Activated CD8-positive, alpha-beta memory T cell treated with anti-CD3 and anti-CD28 coated beads, Interleukin-2, amount 10 ng/mL, durations not matched to agents 7 days and 5 days (primary cell): ENCODE measurements at regions of chr2 and their contacts with region 1.

Region 1: GRCh38 chr2:127479219-127479825 is 47.0 kb downstream of the IWS1 start:
- DNase-seq: no peak
- ATAC-seq: no peak
- H3K4me3 Mint-ChIP-seq: no peak overlapping the region
- H3K27ac Mint-ChIP-seq: no peak overlapping the region
- H3K4me1 Mint-ChIP-seq: no peaks in the 10 kb centered on the region
- H3K27me3 Mint-ChIP-seq: no peaks in the 10 kb centered on the region

Region 2: GRCh38 chr2:127197475-127198385 is 281.6 kb before region 1 on chr2:
- CTCF ChIA-PET with region 1: interaction called, 20 read pairs
- DNase-seq: peak; percentile 73
- ATAC-seq: peak; percentile 91
- H3K4me3 Mint-ChIP-seq: peak overlapping the region; percentile 60
- H3K27ac Mint-ChIP-seq: no peak overlapping the region
- H3K4me1 Mint-ChIP-seq: no peaks in the 10 kb centered on the region
- H3K27me3 Mint-ChIP-seq: peaks cover 4% of the 10 kb centered on the region

Region 3: DNA sequence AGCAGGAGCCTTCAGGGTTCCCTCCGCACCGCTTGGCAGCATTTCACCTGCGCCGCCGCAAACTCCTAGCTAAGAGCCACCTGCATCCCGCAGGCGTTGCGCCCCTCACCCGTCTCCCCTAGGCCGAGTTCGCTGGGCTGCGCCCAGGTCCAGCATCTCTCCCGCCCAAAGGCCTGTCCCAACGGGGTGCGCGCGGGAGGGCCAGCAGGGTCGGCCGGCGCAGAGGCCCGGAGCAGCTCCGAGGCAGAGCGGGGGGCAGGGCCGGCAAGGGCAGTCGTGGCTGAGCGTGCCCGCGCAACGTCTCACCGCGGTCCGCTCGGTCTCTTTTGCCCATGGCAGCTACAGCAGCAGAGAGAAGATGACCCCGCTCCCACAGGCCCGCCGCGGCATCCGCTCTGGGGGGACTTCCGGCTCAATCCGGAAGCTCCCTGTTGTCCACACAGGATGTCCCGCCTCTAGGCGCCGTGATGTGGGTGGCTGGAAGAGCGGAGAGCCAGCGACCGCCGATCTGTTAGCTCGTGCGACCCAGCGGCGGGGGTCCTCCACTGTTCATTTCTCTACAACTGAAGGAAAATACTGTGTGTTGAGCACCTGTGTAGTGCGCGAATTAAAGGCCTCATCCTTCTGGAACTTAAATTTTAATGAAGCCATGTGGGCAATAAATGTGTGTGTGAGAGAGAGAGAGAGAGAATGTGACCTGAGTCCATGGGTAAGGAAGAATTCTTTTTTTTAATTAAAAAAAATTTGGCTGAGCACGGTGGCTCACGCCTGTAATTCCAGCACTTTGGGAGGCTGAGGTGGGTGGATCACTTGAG is 185.4 kb before region 1 on chr2 and contains the start of gene ERCC3:
- CTCF ChIA-PET with region 1: interaction called, 10 read pairs
- DNase-seq: peak; percentile 92
- ATAC-seq: peak; percentile 99
- H3K4me3 Mint-ChIP-seq: peak within 1 kb of the TSS; percentile 100
- H3K27ac Mint-ChIP-seq: peak within 1 kb of the TSS; percentile 97
- H3K4me1 Mint-ChIP-seq: peaks cover 32% of the 10 kb centered on the region
- H3K27me3 Mint-ChIP-seq: no peaks in the 10 kb centered on the region
- total RNA-seq, gene ERCC3: 60.1 to 66.1 TPM